Mammary epithelial cell (primary cell): ENCODE measurements at regions of chr12 and their contacts with region 1.

Region 1: GRCh38 chr12:14995583-14996425 is 23.0 kb downstream of the PDE6H start:
- DNase-seq: peak; percentile 29
- H3K4me3 ChIP-seq: no peak overlapping the region
- H3K27ac ChIP-seq: no peak overlapping the region
- H3K4me1 ChIP-seq: peaks cover 2% of the 10 kb centered on the region
- H3K27me3 ChIP-seq: no peaks in the 10 kb centered on the region
- CTCF ChIP-seq: peak; percentile 61 to 63

Region 2: GRCh38 chr12:14629832-14630710 is 365.7 kb before region 1 on chr12:
- CTCF ChIA-PET with region 1: no interaction called
- dilution Hi-C with region 1: no loop called
- in situ Hi-C with region 1: no loop called
- intact Hi-C with region 1: loop called (anchors 2 kb)
- DNase-seq: peak; percentile 56
- H3K4me3 ChIP-seq: no peak overlapping the region
- H3K27ac ChIP-seq: no peak overlapping the region
- H3K4me1 ChIP-seq: no peaks in the 10 kb centered on the region
- H3K27me3 ChIP-seq: no peaks in the 10 kb centered on the region
- CTCF ChIP-seq: peak; percentile 99 to 100

Region 3: GRCh38 chr12:14723763-14724162 is 272.0 kb before region 1 on chr12:
- CTCF ChIA-PET with region 1: no interaction called
- dilution Hi-C with region 1: no loop called
- in situ Hi-C with region 1: no loop called
- intact Hi-C with region 1: loop called (anchors 1 kb)
- DNase-seq: peak; percentile 41
- H3K4me3 ChIP-seq: no peak overlapping the region
- H3K27ac ChIP-seq: no peak overlapping the region
- H3K4me1 ChIP-seq: no peaks in the 10 kb centered on the region
- H3K27me3 ChIP-seq: no peaks in the 10 kb centered on the region
- CTCF ChIP-seq: peak; percentile 75 to 78

Region 4: DNA sequence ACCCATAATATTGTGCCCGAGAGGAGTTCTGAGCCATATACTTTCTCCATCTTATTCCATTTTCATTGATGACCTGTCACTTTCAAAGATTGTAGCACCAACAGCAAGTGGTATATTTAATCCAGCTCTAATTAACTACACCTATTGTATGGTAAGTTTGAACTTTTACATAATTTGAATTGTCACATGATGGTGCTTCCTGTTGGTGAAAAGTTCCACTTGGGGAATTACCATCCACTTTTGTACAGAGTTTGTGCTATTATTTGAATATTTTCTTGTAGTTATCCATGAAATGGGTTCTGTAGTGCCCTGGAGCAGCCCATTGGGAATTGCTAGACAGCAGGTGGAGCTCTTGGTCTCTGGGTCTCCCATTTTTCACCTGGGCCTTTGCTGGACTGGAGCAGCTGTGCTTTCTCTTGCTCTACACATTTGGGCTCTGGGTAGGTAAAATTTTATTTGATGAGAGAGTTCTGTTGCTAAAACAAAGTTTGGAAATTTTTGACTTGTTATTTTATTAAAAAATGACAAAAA is 184.8 kb before region 1 on chr12:
- CTCF ChIA-PET with region 1: interaction called, 5 read pairs
- dilution Hi-C with region 1: no loop called
- in situ Hi-C with region 1: no loop called
- intact Hi-C with region 1: loop called (anchors 1 kb)
- DNase-seq: peak; percentile 19
- H3K4me3 ChIP-seq: no peak overlapping the region
- H3K27ac ChIP-seq: no peak overlapping the region
- H3K4me1 ChIP-seq: no peaks in the 10 kb centered on the region
- H3K27me3 ChIP-seq: no peaks in the 10 kb centered on the region
- CTCF ChIP-seq: peak; percentile 65 to 85

Region 5: GRCh38 chr12:14937689-14938088 is 58.1 kb before region 1 on chr12:
- CTCF ChIA-PET with region 1: no interaction called
- dilution Hi-C with region 1: no loop called
- in situ Hi-C with region 1: no loop called
- intact Hi-C with region 1: loop called (anchors 2 kb)
- DNase-seq: no peak
- H3K4me3 ChIP-seq: no peak overlapping the region
- H3K27ac ChIP-seq: no peak overlapping the region
- H3K4me1 ChIP-seq: peaks cover 6% of the 10 kb centered on the region
- H3K27me3 ChIP-seq: no peaks in the 10 kb centered on the region
- CTCF ChIP-seq: peak in 1 of 2 donors; percentile 19

Region 6: GRCh38 chr12:15033641-15034040 is 37.8 kb after region 1 on chr12:
- CTCF ChIA-PET with region 1: no interaction called
- dilution Hi-C with region 1: no loop called
- in situ Hi-C with region 1: no loop called
- intact Hi-C with region 1: no loop called
- DNase-seq: no peak
- H3K4me3 ChIP-seq: no peak overlapping the region
- H3K27ac ChIP-seq: no peak overlapping the region
- H3K4me1 ChIP-seq: no peaks in the 10 kb centered on the region
- H3K27me3 ChIP-seq: peaks cover 5% of the 10 kb centered on the region
- CTCF ChIP-seq: no peak